H1 (cell line): ENCODE measurements at regions of chr2 and their contacts with region 1.

Region 1: GRCh38 chr2:10832203-10832936 is 19.8 kb upstream of the PDIA6 start:
- DNase-seq: peak; percentile 70 to 96
- H3K4me3 ChIP-seq: peak overlapping the region in 2 of 4 experiments; percentile 36 to 52; a peak in 4 of 8 replicates
- H3K27ac ChIP-seq: no peak overlapping the region
- H3K4me1 ChIP-seq: peaks cover 0 to 7% (median 4%) of the 10 kb centered on the region in 4 experiments; a peak in 5 of 7 replicates
- H3K27me3 ChIP-seq: peaks cover 0 to 7% (median 4%) of the 10 kb centered on the region in 4 experiments; a peak in 3 of 7 replicates
- CTCF ChIP-seq: peak; percentile 95 to 98 (median 97)
- EP300 ChIP-seq: no peak
- POLR2A ChIP-seq: no peak
- RAD21 ChIP-seq: peak; percentile 95 to 97

Region 2: DNA sequence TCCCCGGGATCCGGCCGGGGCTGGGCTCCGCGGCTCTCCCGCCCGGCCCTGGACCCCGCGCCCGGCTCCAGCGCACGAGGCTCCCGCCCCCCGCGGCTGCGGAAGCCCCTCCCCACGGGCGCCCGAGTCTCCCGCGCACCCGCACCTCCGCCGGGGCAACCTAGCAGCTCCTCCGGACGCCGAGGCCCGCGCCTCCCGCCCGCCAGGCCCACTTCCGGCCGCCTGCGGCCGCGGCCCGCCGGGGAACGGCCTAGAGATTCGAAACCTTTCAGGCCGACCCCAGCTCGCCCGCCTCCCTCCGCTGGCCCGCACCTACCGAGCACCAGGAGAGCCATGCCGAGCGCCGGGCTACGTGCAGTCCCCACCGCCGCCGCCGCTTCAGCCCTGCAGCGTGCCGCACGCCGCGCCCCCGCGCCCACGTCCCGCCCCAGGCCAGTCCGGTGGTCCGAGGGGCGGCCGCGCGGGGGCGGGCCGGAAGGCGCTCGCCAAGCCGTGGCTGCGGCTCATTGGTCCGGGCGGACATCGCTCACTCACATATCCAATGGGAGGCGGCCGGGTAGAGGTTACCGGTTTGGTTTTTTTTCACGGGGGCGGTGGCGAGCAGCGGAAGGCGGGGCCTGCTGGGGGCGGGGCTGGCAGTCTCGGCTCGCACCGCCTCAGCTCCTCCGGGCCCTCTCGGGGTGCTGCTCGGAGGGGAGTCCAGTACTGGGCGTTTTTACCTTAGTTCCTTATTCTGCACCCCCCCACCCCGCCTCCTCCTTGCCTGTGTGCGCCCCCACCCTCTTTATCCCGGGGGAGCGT is 19.8 kb before region 1 on chr2 and contains the start of gene PDIA6:
- CTCF ChIA-PET with region 1: interaction called, 112 read pairs
- POLR2A ChIA-PET with region 1: interaction called, 4 read pairs
- DNase-seq: peak; percentile 82 to 99
- H3K4me3 ChIP-seq: peak within 1 kb of the TSS; percentile 56 to 87 (median 69)
- H3K27ac ChIP-seq: peak within 1 kb of the TSS; percentile 82; the same call in 1 of the 2 replicates
- H3K4me1 ChIP-seq: peaks cover 0 to 15% (median 4%) of the 10 kb centered on the region in 4 experiments; a peak in 6 of 7 replicates
- H3K27me3 ChIP-seq: no peaks in the 10 kb centered on the region; a peak in 2 of 7 replicates
- CTCF ChIP-seq: no peak
- EP300 ChIP-seq: no peak
- POLR2A ChIP-seq: peak; percentile 44 to 75
- RAD21 ChIP-seq: no peak
- total RNA-seq, gene PDIA6: 383 and 384 TPM in 2 replicates

Region 3: GRCh38 chr2:10864861-10865636 is 32.7 kb after region 1 on chr2:
- CTCF ChIA-PET with region 1: interaction called, 11 read pairs
- POLR2A ChIA-PET with region 1: no interaction called
- DNase-seq: no peak
- H3K4me3 ChIP-seq: no peak overlapping the region
- H3K27ac ChIP-seq: no peak overlapping the region
- H3K4me1 ChIP-seq: peaks cover 0 to 3% (median 0%) of the 10 kb centered on the region in 4 experiments; a peak in 1 of 7 replicates
- H3K27me3 ChIP-seq: no peaks in the 10 kb centered on the region
- CTCF ChIP-seq: peak in 1 of 3 experiments; percentile 22; a peak in 1 of 4 replicates
- EP300 ChIP-seq: no peak
- POLR2A ChIP-seq: no peak
- RAD21 ChIP-seq: no peak

Region 4: DNA sequence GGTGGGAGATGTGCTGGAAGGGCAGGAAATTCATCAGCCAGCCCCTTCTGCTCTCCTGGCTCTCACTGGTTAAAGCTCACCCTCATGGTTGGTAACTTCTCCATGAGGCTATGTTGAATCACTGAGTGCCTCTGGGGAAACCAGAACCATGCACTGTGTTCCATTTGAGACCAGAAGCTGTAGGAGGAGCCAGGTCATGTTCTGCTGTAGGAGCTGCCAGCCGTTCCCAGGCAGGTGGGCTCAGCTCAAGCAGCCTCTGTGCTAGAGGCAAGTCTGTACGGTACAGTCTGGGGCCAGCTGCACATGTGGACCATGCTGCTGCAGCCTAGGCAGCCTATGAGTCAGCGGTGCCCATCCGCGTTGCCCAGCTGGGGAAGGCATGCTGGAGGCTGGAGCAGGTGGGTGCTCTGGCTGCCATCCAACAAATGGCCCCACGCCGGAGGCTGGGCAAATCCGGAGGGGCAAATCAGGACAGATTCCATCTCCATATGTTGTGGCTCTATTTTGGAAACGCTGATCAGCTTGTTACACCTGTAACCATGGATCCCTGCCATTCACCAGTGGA is 57.4 kb after region 1 on chr2:
- CTCF ChIA-PET with region 1: interaction called, 21 read pairs
- POLR2A ChIA-PET with region 1: no interaction called
- DNase-seq: no peak
- H3K4me3 ChIP-seq: no peak overlapping the region
- H3K27ac ChIP-seq: no peak overlapping the region
- H3K4me1 ChIP-seq: peaks cover under 1 to 6% (median 2%) of the 10 kb centered on the region in 4 experiments; a peak in 4 of 7 replicates
- H3K27me3 ChIP-seq: no peaks in the 10 kb centered on the region
- CTCF ChIP-seq: no peak
- EP300 ChIP-seq: no peak
- POLR2A ChIP-seq: no peak
- RAD21 ChIP-seq: no peak

Region 5: GRCh38 chr2:10926191-10926820 is 93.9 kb after region 1 on chr2:
- CTCF ChIA-PET with region 1: interaction called, 27 read pairs
- POLR2A ChIA-PET with region 1: no interaction called
- DNase-seq: no peak
- H3K4me3 ChIP-seq: no peak overlapping the region
- H3K27ac ChIP-seq: no peak overlapping the region
- H3K4me1 ChIP-seq: peaks cover 0 to 16% (median 7%) of the 10 kb centered on the region in 4 experiments; a peak in 5 of 7 replicates
- H3K27me3 ChIP-seq: no peaks in the 10 kb centered on the region
- CTCF ChIP-seq: no peak
- EP300 ChIP-seq: no peak
- POLR2A ChIP-seq: no peak
- RAD21 ChIP-seq: no peak

Region 6: GRCh38 chr2:11073251-11073650 is 240.9 kb after region 1 on chr2:
- CTCF ChIA-PET with region 1: interaction called, 39 read pairs
- POLR2A ChIA-PET with region 1: no interaction called
- DNase-seq: peak; percentile 60 to 83
- H3K4me3 ChIP-seq: no peak overlapping the region
- H3K27ac ChIP-seq: no peak overlapping the region
- H3K4me1 ChIP-seq: peaks cover 0 to 6% (median 4%) of the 10 kb centered on the region in 4 experiments; a peak in 4 of 7 replicates
- H3K27me3 ChIP-seq: no peaks in the 10 kb centered on the region
- CTCF ChIP-seq: peak; percentile 76 to 96 (median 93)
- EP300 ChIP-seq: no peak
- POLR2A ChIP-seq: no peak
- RAD21 ChIP-seq: peak; percentile 61 to 73

Region 7: DNA sequence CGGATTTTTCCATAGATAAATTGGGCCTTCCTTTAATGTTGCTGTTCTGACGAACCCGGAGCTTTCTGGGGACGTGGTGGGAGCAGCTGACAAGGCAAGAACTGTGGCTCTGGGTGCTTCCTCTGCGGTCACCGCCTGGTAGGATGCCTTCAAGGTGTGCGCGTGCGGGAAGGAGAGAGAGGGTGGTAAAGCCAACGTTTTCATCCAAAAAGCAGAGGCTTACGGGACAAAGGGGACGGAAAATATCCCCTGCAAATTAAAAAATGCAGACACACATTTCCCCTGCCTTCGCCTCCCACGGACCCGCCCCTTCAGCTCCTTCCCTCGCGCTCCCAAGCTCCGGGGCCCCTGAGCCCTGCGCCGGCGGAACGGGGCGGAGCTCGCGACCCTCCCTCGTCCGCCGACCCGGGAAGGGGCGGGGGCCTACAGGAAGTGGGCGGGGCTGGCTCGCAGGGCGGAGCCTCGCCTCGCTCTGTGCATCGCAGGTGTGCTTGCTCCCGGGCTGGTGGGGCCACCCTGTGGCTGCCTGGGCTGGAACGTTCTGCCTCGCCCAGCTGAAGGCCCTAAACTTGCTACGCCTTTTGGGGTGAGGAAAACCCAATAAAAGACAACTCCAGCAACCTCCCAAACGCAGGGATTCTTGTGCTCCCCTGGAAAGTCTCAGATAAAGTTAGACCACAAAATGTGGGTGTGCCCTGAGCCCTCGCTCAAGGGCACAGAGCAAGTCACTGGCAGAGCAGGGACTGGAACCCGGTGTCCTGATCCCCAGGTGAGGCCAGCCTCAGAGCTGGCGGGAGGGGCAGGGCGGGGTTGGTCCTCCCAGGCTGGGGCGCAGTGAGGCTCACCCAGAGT is 297.5 kb after region 1 on chr2:
- CTCF ChIA-PET with region 1: interaction called, 209 read pairs
- POLR2A ChIA-PET with region 1: interaction called, 6 read pairs
- DNase-seq: peak; percentile 76 to 97
- H3K4me3 ChIP-seq: peak overlapping the region; percentile 32 to 56 (median 46); a peak in 7 of 8 replicates
- H3K27ac ChIP-seq: no peak overlapping the region
- H3K4me1 ChIP-seq: peaks cover 3 to 11% (median 6%) of the 10 kb centered on the region in 4 experiments
- H3K27me3 ChIP-seq: no peaks in the 10 kb centered on the region; a peak in 2 of 7 replicates
- CTCF ChIP-seq: peak; percentile 58 to 72 (median 67)
- EP300 ChIP-seq: peak in 1 of 2 experiments; percentile 54; a peak in 1 of 3 replicates
- POLR2A ChIP-seq: no peak
- RAD21 ChIP-seq: peak; percentile 74 to 80

Region 8: DNA sequence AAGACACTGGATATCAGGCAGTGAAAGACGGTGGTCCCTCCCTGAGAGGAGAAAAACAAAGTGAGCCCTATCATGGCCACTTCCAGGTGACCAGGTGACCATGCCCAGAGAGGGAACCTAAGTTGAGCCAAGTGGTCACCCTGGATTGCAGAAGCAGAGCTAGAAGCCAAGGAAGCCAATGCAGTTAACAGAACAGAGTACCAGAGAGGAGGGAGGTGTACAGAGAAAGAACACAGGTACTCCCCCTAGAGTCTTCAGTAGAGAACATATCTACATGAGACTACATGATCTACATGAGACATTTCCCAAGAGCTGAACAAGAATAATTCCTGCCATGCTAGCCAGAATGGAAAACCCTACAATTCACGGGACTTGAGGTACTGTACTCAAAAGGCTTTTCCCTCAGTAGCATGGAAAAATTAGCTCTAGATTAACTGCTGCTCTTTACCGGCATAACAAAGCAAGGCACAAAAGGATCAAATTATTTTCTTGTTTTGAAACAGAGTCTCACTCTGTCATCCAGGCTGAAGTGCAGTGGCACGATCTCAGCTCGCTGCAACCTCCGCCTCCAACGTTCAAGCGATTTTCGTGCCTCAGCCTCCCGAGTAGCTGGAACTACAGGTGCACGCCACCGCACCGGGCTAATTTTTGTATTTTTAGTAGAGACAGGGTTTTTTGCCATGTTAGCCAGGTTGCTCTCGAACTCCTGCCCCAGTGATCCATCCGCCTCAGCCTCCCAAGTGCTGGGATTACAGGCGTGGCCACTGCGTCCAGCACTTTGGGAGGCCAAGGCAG is 488.5 kb after region 1 on chr2:
- CTCF ChIA-PET with region 1: no interaction called
- POLR2A ChIA-PET with region 1: no interaction called
- DNase-seq: no peak
- H3K4me3 ChIP-seq: no peak overlapping the region
- H3K27ac ChIP-seq: no peak overlapping the region
- H3K4me1 ChIP-seq: no peaks in the 10 kb centered on the region
- H3K27me3 ChIP-seq: no peaks in the 10 kb centered on the region
- CTCF ChIP-seq: peak in 1 of 3 experiments; percentile 25; a peak in 1 of 4 replicates
- EP300 ChIP-seq: no peak
- POLR2A ChIP-seq: no peak
- RAD21 ChIP-seq: peak in 1 of 2 experiments; percentile 28; a peak in 1 of 4 replicates